ENCODE measurements at regions of chr15 and their contacts with region 1.

Region 1: DNA sequence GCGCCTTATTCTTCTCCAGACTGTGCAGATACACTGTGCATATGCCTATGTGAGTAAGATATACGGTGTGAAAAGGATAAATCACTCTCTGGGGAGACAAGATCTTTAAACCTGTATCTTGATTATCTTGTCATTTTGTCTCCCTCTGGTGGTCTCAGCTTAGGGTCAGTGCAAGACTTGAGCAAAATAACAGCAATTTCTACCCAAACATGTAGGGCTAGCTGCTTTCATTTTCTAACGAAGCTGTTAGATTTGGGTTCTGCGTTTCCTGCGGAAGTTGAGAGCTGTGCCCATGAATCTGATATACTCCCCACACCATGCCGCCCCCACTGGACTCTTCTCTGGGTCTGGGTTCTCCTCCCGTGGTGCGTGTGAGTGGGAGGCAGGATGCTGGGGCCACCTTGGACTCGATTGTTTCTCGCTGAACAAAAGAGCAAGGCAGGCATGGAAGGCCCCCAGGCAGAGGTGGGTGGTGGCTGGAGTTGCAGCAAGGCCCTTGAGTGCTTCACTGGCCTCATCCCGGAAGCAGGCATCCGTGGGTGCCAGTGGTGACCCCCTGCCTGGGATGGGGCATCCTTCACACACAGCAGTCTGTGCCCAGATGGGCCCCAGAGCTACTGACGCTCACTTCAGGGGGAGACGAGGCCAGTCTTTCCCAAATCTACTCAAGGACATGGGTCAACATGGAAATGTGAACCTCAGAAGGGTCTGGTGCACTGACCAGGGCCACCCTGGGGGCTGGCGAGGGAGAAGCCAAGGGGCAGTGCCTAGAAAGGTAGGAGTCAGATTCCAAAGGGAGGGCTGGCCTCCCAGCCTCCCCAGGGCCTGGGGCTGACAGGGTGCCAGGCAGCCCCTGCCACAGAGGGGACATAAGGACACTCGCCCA is 179.6 kb downstream of the NSMCE3 start:
- DNase-seq: peak in 1 of 2 donors; percentile 16
- H3K4me3 ChIP-seq: no peak overlapping the region
- H3K27ac ChIP-seq: no peak overlapping the region
- H3K4me1 ChIP-seq: no peaks in the 10 kb centered on the region
- H3K27me3 ChIP-seq: peaks cover 0 to 14% of the 10 kb centered on the region in 2 donors
- CTCF ChIP-seq: no peak

Region 2: GRCh38 chr15:28060005-28060404 is 1030.0 kb before region 1 on chr15:
- intact Hi-C with region 1: loop called (anchors 10 kb)
- DNase-seq: no peak
- H3K4me3 ChIP-seq: no peak overlapping the region
- H3K27ac ChIP-seq: no peak overlapping the region
- H3K4me1 ChIP-seq: no peaks in the 10 kb centered on the region
- H3K27me3 ChIP-seq: no peaks in the 10 kb centered on the region
- CTCF ChIP-seq: no peak